Cardiac septum (tissue), 1 donor: ENCODE measurements at regions of chr6 and their contacts with region 1.

Region 1: GRCh38 chr6:125790358-125791150 is at the start of gene NCOA7:
- DNase-seq: peak; percentile 94
- total RNA-seq, gene NCOA7: 10.3 TPM

Region 2: DNA sequence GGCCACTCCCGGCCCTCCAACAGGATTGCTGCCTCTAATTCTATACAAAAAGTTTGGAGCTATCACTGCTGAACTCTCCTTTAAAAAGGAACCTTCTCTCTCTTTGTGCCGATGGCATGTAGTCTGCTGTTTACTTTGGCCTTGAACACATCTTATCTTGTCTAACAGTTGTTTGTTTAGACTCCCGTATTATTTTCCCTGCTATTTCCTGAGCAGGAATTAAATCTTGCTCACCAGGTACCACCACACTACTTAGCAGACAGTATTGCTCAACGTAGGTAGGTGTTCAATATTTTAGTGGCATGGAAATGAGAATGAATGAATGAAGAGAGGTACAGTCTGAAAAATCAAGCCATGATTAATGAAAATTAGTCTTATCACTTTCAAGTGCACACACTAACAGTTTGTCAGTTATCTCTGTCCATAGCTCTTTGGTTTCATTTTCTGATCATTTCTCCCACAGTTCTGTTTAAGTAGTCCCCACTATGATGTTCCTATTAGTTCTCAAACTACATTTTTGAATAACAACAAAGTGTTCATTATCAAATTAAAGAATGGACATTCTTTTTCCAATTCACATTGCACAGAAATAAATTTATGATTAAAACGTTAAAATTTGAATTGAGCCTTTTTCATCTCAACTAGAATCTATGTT is 48.0 kb before region 1 on chr6:
- intact Hi-C with region 1: no loop called
- DNase-seq: no peak

Region 3: GRCh38 chr6:125835221-125835744 is 44.7 kb after region 1 on chr6:
- intact Hi-C with region 1: loop called (anchors 5 kb)
- DNase-seq: no peak

Region 4: DNA sequence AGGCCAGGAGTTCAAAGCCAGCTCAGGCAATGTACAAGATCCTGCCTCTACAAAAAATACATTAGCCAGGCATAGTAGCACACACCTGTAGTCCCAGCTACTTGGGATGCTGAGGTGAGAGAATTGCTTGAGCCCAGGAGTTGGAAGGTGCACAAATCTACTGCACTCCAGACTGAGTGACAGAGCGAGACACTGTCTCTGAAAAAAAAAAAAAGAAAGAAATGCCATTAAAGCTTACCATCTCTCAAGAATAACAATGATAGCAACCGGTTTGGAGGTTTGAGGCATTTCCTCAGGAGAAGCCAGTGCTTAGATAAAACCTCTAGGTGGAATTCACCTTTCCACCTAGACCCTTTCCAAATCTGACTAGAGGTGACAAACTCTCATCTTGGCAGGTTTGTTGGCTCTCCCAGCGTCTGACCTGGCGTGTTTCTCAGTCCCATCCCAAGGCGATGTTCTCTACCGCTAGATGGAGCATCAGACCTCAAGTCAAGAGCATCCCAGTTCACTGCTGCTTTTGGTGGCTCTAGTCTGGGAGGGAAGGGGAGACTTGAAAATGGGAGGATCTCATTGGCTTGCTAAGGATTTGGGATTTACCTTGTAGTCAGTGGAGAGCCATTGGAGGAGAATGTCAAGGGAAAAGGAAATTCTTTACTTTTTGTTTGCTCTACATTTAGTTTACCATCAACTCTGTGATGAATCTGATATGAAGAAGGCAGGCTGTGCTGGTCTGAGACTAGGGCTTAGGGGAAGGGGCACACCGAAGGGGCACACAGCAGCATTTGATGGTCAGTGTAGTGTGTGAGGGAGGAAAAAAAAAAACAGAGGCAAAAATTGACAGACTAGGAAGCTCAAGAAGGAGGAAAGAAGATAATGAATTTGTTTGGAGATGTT is 68.1 kb after region 1 on chr6:
- intact Hi-C with region 1: loop called (anchors 5 kb)
- DNase-seq: no peak

Region 5: DNA sequence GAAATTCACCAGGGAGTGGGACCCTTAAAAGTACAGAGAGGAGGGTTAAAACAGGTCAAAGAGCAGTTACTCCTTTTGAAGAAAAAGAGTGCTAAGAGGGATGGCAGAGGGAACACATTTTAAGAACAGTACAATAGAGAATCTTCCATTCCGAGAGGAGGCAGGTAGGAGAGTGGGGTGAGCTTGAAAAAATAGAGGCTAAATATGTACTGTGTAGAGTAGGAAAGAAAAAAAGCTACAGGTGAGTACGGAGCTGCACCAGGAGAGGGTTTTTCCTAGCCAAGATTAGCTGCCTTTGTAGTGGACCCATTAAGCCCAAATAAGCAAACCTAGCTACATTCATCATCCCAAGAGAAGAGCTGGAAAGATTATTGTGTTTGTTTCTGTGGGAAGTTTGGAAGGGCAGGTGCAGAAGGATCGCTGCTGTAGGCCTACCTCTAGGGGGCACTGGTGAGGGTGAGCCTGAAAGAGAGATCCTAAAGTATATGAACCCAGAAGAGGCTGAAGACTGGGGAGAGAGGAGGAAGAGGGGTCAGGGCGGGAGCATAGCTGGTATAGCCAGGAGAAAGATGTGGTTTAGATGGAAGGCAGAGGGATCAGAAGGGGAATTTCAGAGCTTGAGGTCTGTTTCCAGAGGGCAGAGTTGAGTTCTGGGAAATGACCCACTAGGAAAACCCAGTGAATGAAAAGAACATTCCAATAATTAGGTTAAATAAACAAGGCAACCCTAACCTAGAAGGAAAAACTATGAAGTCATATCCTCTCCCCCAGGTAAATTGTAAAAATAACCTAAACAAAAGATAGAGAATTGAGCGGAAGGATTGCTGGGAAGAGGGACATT is 115.8 kb after region 1 on chr6:
- intact Hi-C with region 1: no loop called
- DNase-seq: no peak

Region 6: DNA sequence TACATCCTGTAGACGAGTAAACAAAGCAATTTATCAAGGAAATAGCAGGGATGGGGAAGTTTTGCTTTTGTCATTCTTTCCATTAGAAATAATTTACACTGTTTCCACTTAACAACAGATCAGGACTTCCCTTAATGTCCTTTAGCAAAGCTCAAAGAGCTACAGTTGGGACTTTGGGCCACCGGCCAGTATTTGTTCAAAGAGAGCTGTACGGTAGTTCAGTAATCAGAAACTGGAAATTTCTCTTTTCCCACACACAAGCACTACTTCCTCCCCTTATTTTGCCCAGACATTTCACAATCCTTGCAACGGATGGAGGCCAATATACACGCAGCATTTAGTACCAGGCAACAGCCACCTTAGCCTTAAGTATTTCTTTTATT is 153.9 kb after region 1 on chr6:
- intact Hi-C with region 1: no loop called
- DNase-seq: no peak

Region 7: GRCh38 chr6:125956506-125957390 is 166.2 kb after region 1 on chr6 and contains the start of gene HINT3:
- intact Hi-C with region 1: loop called (anchors 5 kb)
- DNase-seq: peak; percentile 99
- total RNA-seq, gene HINT3: 35.0 TPM